ENCODE measurements at regions of chr11 and their contacts with region 1.

Region 1: DNA sequence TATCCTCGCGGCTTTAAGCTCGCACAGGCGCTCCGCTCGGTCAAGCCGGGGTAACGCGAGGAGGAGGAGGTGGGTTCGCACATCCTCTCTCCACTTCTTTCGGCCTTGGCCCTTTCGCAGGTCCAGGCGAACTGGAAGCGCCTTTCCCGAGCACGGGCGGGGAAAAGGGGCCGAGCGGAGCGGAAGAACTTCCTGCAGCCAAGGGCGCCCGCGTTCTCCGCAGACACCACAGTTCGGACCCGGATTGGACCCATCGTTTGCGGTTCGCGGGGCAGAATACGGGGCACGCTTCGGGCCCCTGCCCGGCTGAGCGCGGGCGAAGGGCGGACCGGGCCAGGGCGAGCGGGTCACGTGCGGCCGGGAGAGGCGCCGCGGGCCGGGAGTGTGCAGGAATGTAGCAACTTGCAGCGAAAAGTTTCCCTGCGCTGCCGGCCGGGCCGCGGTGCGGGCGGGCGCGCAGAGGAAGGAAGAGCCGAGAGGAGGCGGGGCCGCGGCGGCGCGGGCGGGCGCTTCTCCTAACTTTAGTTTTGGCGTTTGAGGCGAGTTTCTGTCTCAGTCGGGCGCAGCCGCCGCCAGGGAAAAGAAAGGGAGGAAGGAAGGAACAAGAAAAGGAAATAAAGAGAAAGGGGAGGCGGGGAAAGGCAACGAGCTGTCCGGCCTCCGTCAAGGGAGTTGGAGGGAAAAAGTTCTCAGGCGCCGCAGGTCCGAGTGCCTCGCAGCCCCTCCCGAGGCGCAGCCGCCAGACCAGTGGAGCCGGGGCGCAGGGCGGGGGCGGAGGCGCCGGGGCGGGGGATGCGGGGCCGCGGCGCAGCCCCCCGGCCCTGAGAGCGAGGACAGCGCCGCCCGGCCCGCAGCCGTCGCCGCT is at the start of gene YAP1:
- DNase-seq: peak; percentile 33 to 94
- H3K4me3 ChIP-seq: peak within 1 kb of the TSS; percentile 89
- H3K27ac ChIP-seq: peak within 1 kb of the TSS; percentile 99 to 100
- H3K4me1 ChIP-seq: peaks cover 0 to 10% of the 10 kb centered on the region in 2 donors
- H3K27me3 ChIP-seq: no peaks in the 10 kb centered on the region
- CTCF ChIP-seq: no peak
- total RNA-seq, gene YAP1: 516 TPM

Region 2: DNA sequence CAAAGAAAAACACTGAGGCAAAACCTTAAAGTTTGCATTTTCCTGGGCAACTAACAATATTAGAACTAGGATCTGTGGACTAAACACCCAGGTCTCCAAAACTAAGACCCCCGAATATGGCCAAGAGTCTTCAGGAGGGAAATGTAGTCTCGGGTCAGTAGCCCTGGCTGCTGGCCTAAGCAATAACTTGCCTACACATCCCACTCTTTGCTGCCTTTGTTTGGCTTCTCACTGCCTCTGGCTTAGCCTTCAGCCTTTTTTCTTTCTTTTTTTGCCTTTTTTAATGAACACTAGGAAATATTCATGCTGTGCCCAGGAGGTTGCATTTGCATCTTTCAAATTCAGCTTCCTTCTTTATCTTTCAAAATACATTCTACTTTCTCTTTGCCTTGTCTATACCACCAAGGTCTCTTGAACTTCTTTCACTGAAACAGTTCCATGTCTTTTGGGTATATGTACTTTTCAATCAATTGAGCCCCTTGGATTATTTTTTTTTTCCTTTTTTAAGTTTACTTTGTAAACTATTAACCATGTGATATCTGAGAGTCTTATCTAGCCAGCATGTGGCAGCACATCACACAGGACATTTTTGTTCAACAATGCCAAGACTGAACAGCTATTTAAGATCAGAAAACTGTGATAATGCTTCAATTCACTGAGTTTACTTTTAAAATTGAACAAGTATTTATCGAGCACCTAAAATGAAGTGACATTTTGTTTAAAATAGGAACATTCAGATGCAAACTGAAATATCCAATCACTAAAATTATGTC is 361.4 kb before region 1 on chr11:
- intact Hi-C with region 1: no loop called
- DNase-seq: no peak
- H3K4me3 ChIP-seq: no peak overlapping the region
- H3K27ac ChIP-seq: no peak overlapping the region
- H3K4me1 ChIP-seq: no peaks in the 10 kb centered on the region
- H3K27me3 ChIP-seq: no peaks in the 10 kb centered on the region
- CTCF ChIP-seq: no peak

Region 3: GRCh38 chr11:101759771-101760450 is 350.2 kb before region 1 on chr11:
- intact Hi-C with region 1: no loop called
- DNase-seq: no peak
- H3K4me3 ChIP-seq: no peak overlapping the region
- H3K27ac ChIP-seq: no peak overlapping the region
- H3K4me1 ChIP-seq: no peaks in the 10 kb centered on the region
- H3K27me3 ChIP-seq: no peaks in the 10 kb centered on the region
- CTCF ChIP-seq: no peak

Region 4: DNA sequence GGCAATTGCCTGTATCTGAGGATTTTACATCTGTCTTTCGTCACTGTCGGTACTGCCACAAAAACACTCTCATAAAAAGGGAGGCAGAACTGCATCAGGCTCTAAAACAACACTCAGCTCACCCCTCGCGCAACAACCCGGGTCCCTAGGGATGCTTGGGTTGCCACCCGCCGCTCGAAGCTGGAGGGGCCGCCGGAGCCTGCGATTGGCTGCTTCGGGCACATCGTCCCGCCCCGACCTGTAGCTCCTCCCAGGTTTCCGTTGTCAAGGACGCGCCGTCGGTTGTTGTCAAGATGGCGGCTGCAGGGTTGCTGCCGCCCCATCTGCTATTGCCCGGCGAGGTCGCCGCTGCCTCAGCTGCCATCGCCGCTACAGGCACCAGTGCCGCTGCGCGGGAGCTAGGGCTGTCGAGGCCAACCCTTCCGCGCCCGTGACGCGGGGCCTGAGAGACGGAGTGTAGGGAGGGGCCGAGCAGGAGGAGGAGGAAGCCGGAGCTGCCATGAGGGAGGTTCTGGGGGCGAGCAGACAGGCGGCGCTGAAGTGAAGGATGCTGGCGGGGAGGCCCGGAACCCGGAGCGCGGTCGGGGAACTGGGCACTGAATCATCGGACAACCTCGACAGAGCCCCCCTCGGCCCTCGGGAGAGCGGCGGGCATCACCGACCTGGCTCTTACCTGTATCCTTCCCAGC is 195.2 kb before region 1 on chr11 and contains the start of gene CEP126:
- intact Hi-C with region 1: loop called (anchors 2 kb)
- DNase-seq: peak; percentile 77 to 98
- H3K4me3 ChIP-seq: peak within 1 kb of the TSS; percentile 46 to 74
- H3K27ac ChIP-seq: peak within 1 kb of the TSS; percentile 86 to 97
- H3K4me1 ChIP-seq: peaks cover 6 to 9% of the 10 kb centered on the region in 2 donors
- H3K27me3 ChIP-seq: no peaks in the 10 kb centered on the region
- CTCF ChIP-seq: peak; percentile 40 to 59 (median 42)
- total RNA-seq, gene CEP126: 7.2 TPM

Region 5: GRCh38 chr11:102139081-102139498 is 29.0 kb after region 1 on chr11:
- intact Hi-C with region 1: loop called (anchors 2 kb)
- DNase-seq: peak; percentile 17 to 85
- H3K4me3 ChIP-seq: peak overlapping the region in 1 of 2 donors; percentile 26
- H3K27ac ChIP-seq: peak overlapping the region; percentile 82 to 92
- H3K4me1 ChIP-seq: peaks cover 4 to 41% of the 10 kb centered on the region in 2 donors
- H3K27me3 ChIP-seq: no peaks in the 10 kb centered on the region
- CTCF ChIP-seq: no peak

Region 6: GRCh38 chr11:102177974-102178631 is 68.0 kb after region 1 on chr11:
- intact Hi-C with region 1: loop called (anchors 2 kb)
- DNase-seq: no peak
- H3K4me3 ChIP-seq: peak overlapping the region in 1 of 2 donors; percentile 24
- H3K27ac ChIP-seq: peak overlapping the region; percentile 88
- H3K4me1 ChIP-seq: peaks cover 0 to 19% of the 10 kb centered on the region in 2 donors
- H3K27me3 ChIP-seq: no peaks in the 10 kb centered on the region
- CTCF ChIP-seq: no peak

Region 7: DNA sequence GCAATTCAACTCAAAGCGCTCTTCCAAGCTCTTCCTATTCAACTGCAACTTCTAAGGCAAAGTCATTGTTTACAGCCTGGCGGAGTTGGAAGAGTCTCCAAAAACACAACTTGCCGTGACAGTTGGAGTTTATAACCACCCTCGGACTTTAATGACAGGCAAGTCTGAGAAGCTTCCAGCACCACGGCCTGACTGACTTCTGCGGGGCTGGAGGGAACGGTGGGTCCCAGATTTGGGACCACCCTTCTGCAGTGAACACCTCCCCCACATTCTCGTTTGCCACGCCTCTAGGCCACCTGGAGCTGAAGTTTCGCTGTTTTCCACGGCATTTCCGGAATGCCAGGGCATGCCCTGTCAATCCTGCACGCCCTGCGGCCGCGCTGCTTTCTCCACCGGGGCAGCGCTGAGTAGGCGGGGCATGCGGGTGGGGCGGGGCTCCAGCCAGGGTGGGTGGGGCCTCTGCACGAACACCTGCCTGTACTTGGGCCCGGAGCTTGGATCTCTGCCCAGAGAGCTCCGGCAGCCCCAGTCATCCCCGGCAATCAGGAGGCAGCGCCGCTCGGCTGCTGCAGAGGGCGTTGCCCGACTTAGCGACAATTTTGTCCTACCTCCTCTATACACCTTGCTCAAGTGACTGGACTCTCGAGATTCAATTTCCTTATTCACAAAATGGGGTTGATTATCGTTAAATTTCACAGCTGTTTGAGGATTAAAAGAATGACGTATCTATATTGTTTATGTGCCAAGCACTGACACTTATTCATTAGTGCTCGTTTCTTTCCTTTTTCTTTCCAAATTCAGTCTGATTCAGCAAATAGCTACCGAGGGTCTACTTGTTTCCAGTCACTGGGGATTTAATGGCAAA is 158.4 kb after region 1 on chr11:
- intact Hi-C with region 1: loop called (anchors 1 kb)
- DNase-seq: peak; percentile 37 to 88
- H3K4me3 ChIP-seq: peak overlapping the region; percentile 47 to 59
- H3K27ac ChIP-seq: peak overlapping the region; percentile 35 to 43
- H3K4me1 ChIP-seq: peaks cover 0 to 4% of the 10 kb centered on the region in 2 donors
- H3K27me3 ChIP-seq: no peaks in the 10 kb centered on the region
- CTCF ChIP-seq: peak; percentile 27 to 79 (median 47)

Region 8: GRCh38 chr11:102346748-102347461 is 236.8 kb after region 1 on chr11 and contains the start of gene BIRC2:
- intact Hi-C with region 1: loop called (anchors 5 kb)
- DNase-seq: peak; percentile 66 to 97
- H3K4me3 ChIP-seq: peak within 1 kb of the TSS; percentile 78 to 81
- H3K27ac ChIP-seq: peak within 1 kb of the TSS; percentile 98
- H3K4me1 ChIP-seq: peaks cover 2 to 3% of the 10 kb centered on the region in 2 donors
- H3K27me3 ChIP-seq: no peaks in the 10 kb centered on the region
- CTCF ChIP-seq: peak; percentile 86 to 87 (median 86)
- total RNA-seq, gene BIRC2: 27.7 TPM